GM12878 (cell line): ENCODE measurements at regions of chr1 and their contacts with region 1.

Region 1: DNA sequence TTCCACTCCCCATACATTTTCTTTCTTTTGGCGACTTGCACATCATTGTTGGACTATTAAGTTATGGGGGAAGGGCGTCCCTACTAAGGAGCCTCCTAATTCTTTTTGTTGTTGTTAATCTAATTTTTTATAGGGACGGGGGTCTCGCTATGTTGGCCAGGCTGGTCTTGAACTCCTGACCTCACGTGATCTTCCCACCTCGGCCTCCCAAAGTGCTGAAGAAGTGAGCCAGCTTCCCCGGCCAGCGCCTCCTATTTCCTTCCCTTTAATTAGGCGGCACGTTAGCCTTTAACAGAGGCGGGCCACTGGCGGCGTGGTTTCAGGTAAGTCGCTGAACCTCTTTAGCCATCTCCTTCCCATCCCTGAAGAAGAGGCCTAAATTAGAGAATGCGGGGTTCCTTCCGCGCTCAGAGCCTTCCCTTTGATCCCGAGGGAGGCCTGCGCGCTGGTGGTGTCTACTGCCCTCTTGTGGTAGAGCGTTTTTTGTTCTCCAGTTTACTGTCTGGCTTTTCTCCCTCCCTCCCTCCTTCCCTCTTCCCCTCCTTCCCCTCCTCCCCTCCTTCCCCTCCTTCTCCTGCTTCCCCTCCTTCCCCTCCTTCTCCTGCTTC is 38.1 kb downstream of the TNFRSF9 start:
- DNase-seq: no peak
- ATAC-seq: peak; percentile 92
- H3K4me3 ChIP-seq: no peak overlapping the region
- H3K27ac ChIP-seq: no peak overlapping the region
- H3K4me1 ChIP-seq: no peaks in the 10 kb centered on the region
- H3K27me3 ChIP-seq: no peaks in the 10 kb centered on the region
- CTCF ChIP-seq: peak; percentile 65 to 84 (median 73)
- EP300 ChIP-seq: no peak
- POLR2A ChIP-seq: no peak
- RAD21 ChIP-seq: peak; percentile 70

Region 2: DNA sequence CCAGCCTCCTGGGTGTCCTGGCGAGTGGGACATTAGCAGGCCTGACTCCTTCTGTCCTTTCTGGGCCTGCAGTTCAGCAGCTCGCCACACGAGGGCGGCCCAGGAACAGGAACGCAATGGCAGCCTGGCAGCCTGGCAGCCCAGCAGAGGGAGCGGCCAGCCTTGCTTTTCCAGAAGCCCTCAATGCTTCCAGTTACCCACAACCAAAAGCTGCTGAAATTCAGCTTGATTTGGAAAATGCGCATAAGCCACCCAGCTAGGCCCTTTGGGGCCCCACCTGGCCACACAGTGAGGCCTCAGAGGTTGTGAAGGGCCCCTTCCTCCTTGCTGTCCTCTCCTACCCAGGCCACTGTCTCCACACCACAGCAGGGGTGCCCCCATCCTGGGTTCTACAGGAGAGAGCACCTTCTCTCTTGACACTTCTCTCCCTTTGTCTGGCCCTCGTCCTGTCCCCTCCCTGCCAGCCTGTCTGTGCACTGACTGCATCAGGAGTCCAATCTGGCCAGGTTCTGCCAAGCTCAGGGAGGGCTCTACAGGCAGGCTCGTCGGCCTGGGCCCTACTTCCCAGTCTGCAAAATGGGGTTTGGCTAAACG is 234.9 kb before region 1 on chr1:
- CTCF ChIA-PET with region 1: interaction called, 16 read pairs
- POLR2A ChIA-PET with region 1: no interaction called
- RAD21 ChIA-PET with region 1: interaction called, 4 read pairs
- SMC1A ChIA-PET with region 1: interaction called, 11 read pairs
- in situ Hi-C with region 1: loop called (anchors 5 kb)
- intact Hi-C with region 1: loop called (anchors 1 kb)
- DNase-seq: peak; percentile 11
- ATAC-seq: peak; percentile 93
- H3K4me3 ChIP-seq: no peak overlapping the region
- H3K27ac ChIP-seq: no peak overlapping the region
- H3K4me1 ChIP-seq: no peaks in the 10 kb centered on the region
- H3K27me3 ChIP-seq: no peaks in the 10 kb centered on the region; a peak in 1 of 4 replicates
- CTCF ChIP-seq: peak; percentile 98 to 99 (median 99); a peak in 5 of 6 replicates
- EP300 ChIP-seq: no peak
- POLR2A ChIP-seq: no peak
- RAD21 ChIP-seq: peak; percentile 95

Region 3: DNA sequence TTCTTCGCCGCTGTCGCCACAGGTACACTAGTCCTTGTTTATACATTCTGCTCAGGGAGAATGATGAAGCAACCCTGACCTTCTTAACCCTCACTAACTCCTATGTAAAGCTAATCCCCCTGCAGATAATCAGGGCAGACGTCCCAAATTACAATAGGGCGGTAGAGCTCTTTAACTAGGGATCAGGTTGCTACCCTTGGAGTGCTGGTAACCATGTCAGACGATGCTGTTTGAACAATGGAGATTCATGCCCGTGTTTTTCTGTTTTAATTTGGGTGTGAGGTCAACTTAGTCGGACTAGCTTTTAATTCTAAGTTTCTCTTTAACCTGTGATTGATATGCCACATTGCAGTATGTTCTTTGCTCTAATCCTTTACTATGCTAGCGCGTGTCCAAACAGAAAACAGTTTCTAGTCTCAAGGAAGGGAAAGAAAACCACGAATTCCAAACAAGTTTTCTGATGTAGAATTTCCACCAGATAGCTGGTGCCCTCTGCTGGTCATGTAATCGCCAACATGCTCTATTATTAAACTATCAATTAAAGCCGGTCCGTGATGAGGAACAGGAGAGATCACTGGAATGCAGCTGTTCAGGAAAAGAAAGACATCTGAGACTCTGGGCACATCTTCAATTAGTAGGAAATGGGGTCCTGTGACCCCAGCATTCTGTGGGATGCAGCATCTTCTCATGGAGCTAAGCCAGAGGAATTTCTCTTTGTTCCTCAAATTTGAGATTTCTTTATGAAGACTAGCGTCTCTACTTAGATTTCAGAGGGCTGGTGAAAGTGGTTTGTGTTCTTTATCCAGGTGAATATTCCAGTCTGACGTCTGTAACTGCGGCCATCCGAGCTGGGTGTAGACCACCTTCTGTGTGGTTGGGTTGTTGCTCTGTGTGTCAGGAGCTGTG is 149.8 kb before region 1 on chr1:
- CTCF ChIA-PET with region 1: interaction called, 9 read pairs
- POLR2A ChIA-PET with region 1: no interaction called
- RAD21 ChIA-PET with region 1: no interaction called
- SMC1A ChIA-PET with region 1: interaction called, 7 read pairs
- in situ Hi-C with region 1: no loop called
- intact Hi-C with region 1: loop called (anchors 5 kb)
- DNase-seq: no peak
- ATAC-seq: peak; percentile 69
- H3K4me3 ChIP-seq: no peak overlapping the region
- H3K27ac ChIP-seq: no peak overlapping the region
- H3K4me1 ChIP-seq: no peaks in the 10 kb centered on the region
- H3K27me3 ChIP-seq: peaks cover 0 to 3% of the 10 kb centered on the region in 2 experiments; a peak in 1 of 4 replicates
- CTCF ChIP-seq: peak; percentile 67 to 77 (median 70)
- EP300 ChIP-seq: no peak
- POLR2A ChIP-seq: no peak
- RAD21 ChIP-seq: peak; percentile 55

Region 4: GRCh38 chr1:7808253-7808844 is 94.2 kb before region 1 on chr1:
- CTCF ChIA-PET with region 1: interaction called, 24 read pairs
- POLR2A ChIA-PET with region 1: no interaction called
- RAD21 ChIA-PET with region 1: interaction called, 10 read pairs
- SMC1A ChIA-PET with region 1: interaction called, 9 read pairs
- in situ Hi-C with region 1: no loop called
- intact Hi-C with region 1: loop called (anchors 5 kb)
- DNase-seq: no peak
- ATAC-seq: peak; percentile 73
- H3K4me3 ChIP-seq: no peak overlapping the region
- H3K27ac ChIP-seq: no peak overlapping the region
- H3K4me1 ChIP-seq: no peaks in the 10 kb centered on the region
- H3K27me3 ChIP-seq: no peaks in the 10 kb centered on the region
- CTCF ChIP-seq: peak; percentile 42 to 57 (median 48); a peak in 5 of 6 replicates
- EP300 ChIP-seq: no peak
- POLR2A ChIP-seq: no peak
- RAD21 ChIP-seq: peak; percentile 55

Region 5: GRCh38 chr1:7915826-7916500 is 13.4 kb after region 1 on chr1:
- CTCF ChIA-PET with region 1: interaction called, 14 read pairs
- POLR2A ChIA-PET with region 1: no interaction called
- RAD21 ChIA-PET with region 1: no interaction called
- SMC1A ChIA-PET with region 1: interaction called, 6 read pairs
- in situ Hi-C with region 1: no loop called
- intact Hi-C with region 1: no loop called
- DNase-seq: no peak
- ATAC-seq: no peak
- H3K4me3 ChIP-seq: no peak overlapping the region
- H3K27ac ChIP-seq: no peak overlapping the region
- H3K4me1 ChIP-seq: no peaks in the 10 kb centered on the region
- H3K27me3 ChIP-seq: no peaks in the 10 kb centered on the region
- CTCF ChIP-seq: no peak
- EP300 ChIP-seq: no peak
- POLR2A ChIP-seq: no peak
- RAD21 ChIP-seq: no peak

Region 6: GRCh38 chr1:8197493-8198282 is 295.1 kb after region 1 on chr1:
- CTCF ChIA-PET with region 1: no interaction called
- POLR2A ChIA-PET with region 1: no interaction called
- RAD21 ChIA-PET with region 1: no interaction called
- SMC1A ChIA-PET with region 1: no interaction called
- in situ Hi-C with region 1: no loop called
- intact Hi-C with region 1: no loop called
- DNase-seq: no peak
- ATAC-seq: no peak
- H3K4me3 ChIP-seq: no peak overlapping the region
- H3K27ac ChIP-seq: no peak overlapping the region
- H3K4me1 ChIP-seq: no peaks in the 10 kb centered on the region; the same call in 1 of the 2 replicates
- H3K27me3 ChIP-seq: no peaks in the 10 kb centered on the region; a peak in 1 of 4 replicates
- CTCF ChIP-seq: no peak
- EP300 ChIP-seq: no peak
- POLR2A ChIP-seq: no peak
- RAD21 ChIP-seq: no peak

Region 7: DNA sequence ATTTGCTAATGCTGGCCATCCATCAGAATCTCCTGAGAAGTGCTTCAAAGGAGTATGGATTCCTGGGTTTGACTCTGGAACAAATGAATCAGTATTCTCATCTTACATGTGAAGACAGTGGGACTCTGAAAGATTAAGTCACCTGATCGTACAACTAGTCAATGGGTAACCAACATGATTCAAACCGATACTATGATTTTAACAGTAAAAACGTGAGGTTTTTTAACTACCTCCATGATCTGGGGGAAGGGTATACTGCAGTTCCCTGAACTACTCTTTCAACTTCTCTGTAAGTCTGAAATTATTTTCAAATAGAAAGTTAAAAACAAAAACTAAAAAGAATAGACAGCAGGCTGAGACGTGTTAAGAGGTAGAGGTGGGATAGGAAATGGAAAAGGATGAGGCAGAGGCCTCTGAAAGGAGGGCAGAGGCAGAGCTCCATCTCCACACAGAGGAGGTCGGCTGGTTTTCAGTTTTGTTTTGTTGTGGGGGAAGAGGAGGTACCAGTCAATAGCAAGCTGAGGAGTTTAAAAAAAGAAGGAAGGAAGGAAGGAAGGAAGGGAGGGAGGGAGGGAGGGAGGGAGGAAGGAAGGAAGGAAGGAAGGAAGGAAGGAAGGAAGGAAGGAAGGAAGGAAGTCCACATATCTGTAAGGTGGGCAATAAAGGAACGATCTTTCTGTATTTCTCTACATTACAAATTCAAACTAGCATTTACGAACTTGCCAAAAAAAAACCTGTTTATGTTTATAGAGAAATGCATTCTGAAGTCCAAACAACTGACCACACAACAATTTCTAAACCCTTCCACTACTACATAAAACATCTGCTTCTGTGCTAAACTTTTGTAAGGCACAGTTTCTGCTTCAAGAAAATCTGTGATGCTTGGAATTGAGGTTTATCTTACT is 701.7 kb after region 1 on chr1:
- CTCF ChIA-PET with region 1: no interaction called
- POLR2A ChIA-PET with region 1: no interaction called
- RAD21 ChIA-PET with region 1: no interaction called
- SMC1A ChIA-PET with region 1: no interaction called
- in situ Hi-C with region 1: no loop called
- intact Hi-C with region 1: no loop called
- DNase-seq: peak; percentile 82
- ATAC-seq: peak; percentile 95
- H3K4me3 ChIP-seq: peak overlapping the region; percentile 46; the same call in 1 of the 2 replicates
- H3K27ac ChIP-seq: peak overlapping the region; percentile 29; the same call in 1 of the 2 replicates
- H3K4me1 ChIP-seq: peaks cover 19% of the 10 kb centered on the region
- H3K27me3 ChIP-seq: no peaks in the 10 kb centered on the region
- CTCF ChIP-seq: no peak
- EP300 ChIP-seq: peak in 1 of 2 experiments; percentile 58; a peak in 1 of 4 replicates
- POLR2A ChIP-seq: no peak
- RAD21 ChIP-seq: 0 out of 2 replicates have a peak, but pooled peaks have one; percentile 12